ENCODE measurements at regions of chr12 and their contacts with region 1.

Region 1: DNA sequence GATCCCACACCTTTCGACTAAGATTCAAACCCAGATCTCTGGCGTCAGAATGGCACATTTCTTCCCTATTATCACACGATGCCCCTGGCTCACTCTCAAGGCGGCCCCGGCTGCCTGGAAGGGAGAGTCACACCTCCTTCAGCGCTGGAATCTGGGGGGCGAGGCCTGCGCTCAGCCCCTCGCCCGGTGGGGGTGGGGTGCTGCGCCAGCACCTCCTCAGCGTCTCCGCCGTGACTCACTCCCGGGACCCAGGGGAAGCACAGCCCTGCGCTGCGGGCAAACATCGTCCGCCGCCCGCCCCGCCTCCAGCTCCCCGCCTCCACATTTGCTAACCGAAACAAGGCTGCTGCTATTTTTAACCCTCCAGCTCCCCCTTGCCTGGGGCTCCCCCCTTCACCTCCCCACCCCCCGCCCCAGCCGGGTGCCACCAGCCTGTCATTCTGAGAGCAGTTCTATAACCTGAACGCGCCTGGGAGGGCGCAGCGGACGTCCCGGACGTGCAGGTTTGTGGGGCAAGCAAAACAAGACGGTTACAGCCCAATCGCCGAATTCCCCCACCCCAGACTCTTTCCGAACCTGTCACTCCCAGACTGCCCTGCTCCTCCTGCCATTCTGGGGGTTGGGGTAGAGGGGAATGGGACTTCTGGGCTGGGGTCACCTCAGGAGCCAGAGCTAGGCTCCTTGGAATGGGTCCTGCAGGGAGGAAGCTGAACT is 6.7 kb downstream of the HDAC7 start:
- DNase-seq: peak; percentile 98
- ATAC-seq: peak; percentile 73
- H3K4me3 Mint-ChIP-seq: peak overlapping the region; percentile 91
- H3K27ac Mint-ChIP-seq: peak overlapping the region; percentile 96
- H3K4me1 Mint-ChIP-seq: peaks cover 87% of the 10 kb centered on the region
- H3K27me3 Mint-ChIP-seq: no peaks in the 10 kb centered on the region

Region 2: GRCh38 chr12:47616440-47616839 is 196.5 kb before region 1 on chr12:
- CTCF ChIA-PET with region 1: no interaction called
- DNase-seq: no peak
- ATAC-seq: no peak
- H3K4me3 Mint-ChIP-seq: no peak overlapping the region
- H3K27ac Mint-ChIP-seq: no peak overlapping the region
- H3K4me1 Mint-ChIP-seq: no peaks in the 10 kb centered on the region
- H3K27me3 Mint-ChIP-seq: no peaks in the 10 kb centered on the region

Region 3: DNA sequence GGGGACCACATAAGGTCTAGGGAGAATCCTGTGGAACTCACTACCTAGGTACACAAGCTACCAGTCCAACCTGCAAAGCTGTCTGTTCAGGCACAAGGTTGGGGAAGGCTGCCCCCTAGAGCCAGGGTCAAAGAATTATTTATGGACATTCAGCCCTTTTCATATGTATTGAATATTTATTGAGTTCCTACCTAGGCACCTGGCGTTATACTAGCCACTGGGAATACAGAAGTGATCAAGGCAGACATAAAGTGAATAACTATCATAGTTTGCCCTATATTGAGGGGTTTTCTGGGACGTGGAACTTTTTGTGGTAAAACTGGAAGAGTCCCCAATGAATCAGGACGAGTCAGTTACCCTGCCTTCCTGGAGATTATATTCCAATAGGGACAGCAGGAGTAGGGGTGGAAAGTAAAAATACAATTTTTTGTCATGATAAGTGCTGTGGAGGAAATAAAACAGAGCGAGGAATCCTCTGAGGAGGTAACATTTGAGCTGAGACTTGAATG is 45.7 kb before region 1 on chr12:
- CTCF ChIA-PET with region 1: interaction called, 29 read pairs
- DNase-seq: peak; percentile 89
- ATAC-seq: peak; percentile 85
- H3K4me3 Mint-ChIP-seq: no peak overlapping the region
- H3K27ac Mint-ChIP-seq: peak overlapping the region; percentile 58
- H3K4me1 Mint-ChIP-seq: peaks cover 27% of the 10 kb centered on the region
- H3K27me3 Mint-ChIP-seq: peaks cover 16% of the 10 kb centered on the region

Region 4: DNA sequence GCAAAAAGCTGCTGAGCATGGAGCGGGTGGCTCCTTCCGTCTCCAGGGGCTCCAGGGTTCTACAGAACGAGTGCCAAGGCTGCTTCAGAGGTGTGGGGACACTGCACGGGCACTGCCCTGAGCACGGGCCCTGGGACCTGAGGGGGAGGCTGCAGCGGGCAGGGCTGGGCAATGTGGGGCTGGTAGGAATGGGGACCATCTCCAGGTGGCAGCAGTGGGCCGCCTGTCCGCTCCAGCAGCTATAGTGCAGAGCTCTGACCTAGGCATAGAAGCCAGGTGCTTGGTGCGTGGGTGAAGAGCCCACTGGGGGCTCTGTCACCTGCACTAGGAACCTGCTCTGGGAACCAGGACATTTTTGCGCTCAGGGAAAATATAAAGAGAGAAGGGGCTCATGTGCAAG is 15.5 kb before region 1 on chr12:
- CTCF ChIA-PET with region 1: interaction called, 34 read pairs
- DNase-seq: peak; percentile 61
- ATAC-seq: peak; percentile 72
- H3K4me3 Mint-ChIP-seq: no peak overlapping the region
- H3K27ac Mint-ChIP-seq: peak overlapping the region; percentile 66
- H3K4me1 Mint-ChIP-seq: peaks cover 29% of the 10 kb centered on the region
- H3K27me3 Mint-ChIP-seq: no peaks in the 10 kb centered on the region

Region 5: GRCh38 chr12:47882781-47883546 is 70.0 kb after region 1 on chr12:
- CTCF ChIA-PET with region 1: interaction called, 12 read pairs
- DNase-seq: peak; percentile 68
- ATAC-seq: peak; percentile 43
- H3K4me3 Mint-ChIP-seq: peak overlapping the region; percentile 73
- H3K27ac Mint-ChIP-seq: peak overlapping the region; percentile 96
- H3K4me1 Mint-ChIP-seq: peaks cover 80% of the 10 kb centered on the region
- H3K27me3 Mint-ChIP-seq: no peaks in the 10 kb centered on the region

Measured in activated CD8-positive, alpha-beta memory T cell treated with anti-CD3 and anti-CD28 coated beads, Interleukin-2, amount 10 ng/mL, durations not matched to agents 7 days and 5 days (primary cell).